ENCODE measurements at regions of chr14 and their contacts with region 1.

Region 1: DNA sequence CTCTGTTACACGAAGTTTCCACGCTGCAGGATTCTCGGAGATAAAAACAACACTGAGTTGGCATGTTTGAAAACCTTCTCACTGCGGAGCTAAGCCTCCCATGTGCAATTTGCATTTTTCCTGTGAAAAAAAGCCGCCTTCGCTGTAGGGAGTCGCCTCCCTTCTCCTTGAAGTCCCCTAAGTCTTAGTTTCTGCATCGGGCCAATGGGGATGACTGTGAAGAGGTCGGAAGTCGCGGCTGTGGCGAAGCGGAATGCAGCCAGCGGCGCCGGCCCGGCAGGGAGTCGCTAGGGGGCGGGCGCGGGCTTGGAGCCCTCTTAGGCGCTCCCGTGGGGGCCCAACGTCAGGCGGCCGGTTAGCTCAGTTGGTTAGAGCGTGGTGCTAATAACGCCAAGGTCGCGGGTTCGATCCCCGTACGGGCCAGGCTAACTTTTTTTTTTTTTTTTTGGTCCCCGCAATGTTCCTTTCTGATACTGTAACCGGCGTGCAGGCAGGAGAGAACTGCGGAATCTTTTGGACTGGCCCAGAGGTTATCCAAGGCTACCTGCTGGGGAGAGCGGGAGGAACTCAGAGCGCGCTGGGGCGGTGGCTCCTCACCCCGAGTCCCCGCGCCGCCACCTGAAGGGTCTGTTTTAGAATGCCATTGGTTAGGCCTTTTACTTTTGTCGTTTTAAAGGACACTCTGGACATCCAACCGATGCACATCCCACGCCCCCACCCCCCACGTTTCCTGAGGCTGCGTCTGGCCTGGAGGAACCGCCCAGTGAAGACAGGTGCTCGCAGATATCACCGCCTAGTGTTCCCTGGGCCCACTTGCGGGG is 2.6 kb upstream of the ZNF839 start:
- DNase-seq: peak; percentile 99
- ATAC-seq: peak; percentile 71
- H3K4me3 Mint-ChIP-seq: peak overlapping the region; percentile 96
- H3K27ac Mint-ChIP-seq: peak overlapping the region; percentile 89
- H3K4me1 Mint-ChIP-seq: peaks cover 63% of the 10 kb centered on the region
- H3K27me3 Mint-ChIP-seq: no peaks in the 10 kb centered on the region
- CTCF ChIP-seq: no peak

Region 2: GRCh38 chr14:101761032-101761880 is 555.7 kb before region 1 on chr14 and contains the start of gene PPP2R5C:
- CTCF ChIA-PET with region 1: no interaction called
- POLR2A ChIA-PET with region 1: no interaction called
- intact Hi-C with region 1: loop called (anchors 1 kb)
- DNase-seq: peak; percentile 81
- ATAC-seq: peak; percentile 63
- H3K4me3 Mint-ChIP-seq: peak within 1 kb of the TSS; percentile 88
- H3K27ac Mint-ChIP-seq: peak within 1 kb of the TSS; percentile 77
- H3K4me1 Mint-ChIP-seq: peaks cover 18% of the 10 kb centered on the region
- H3K27me3 Mint-ChIP-seq: no peaks in the 10 kb centered on the region
- CTCF ChIP-seq: no peak
- total RNA-seq, gene PPP2R5C: 197 and 227 TPM in 2 replicates

Region 3: DNA sequence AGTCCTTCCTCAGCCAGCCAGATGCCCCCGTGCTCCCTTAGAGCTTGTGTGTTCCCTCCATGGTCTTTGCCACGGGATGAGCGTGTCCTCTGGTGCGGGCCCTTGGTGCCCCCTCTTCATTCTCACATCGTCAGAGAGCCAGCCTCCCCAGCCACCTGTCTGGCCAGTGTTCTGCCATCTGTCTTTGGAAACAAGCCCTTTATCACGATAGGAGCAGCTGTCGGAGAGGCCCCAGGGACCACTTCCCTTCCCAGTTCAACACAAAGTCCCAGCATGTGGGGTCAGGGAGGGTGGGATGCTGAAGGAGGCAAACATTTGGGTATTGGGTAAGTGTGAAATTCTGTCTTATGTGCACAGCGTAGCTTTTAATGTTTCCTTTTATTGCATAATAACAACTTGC is 308.1 kb before region 1 on chr14:
- CTCF ChIA-PET with region 1: no interaction called
- POLR2A ChIA-PET with region 1: interaction called, 12 read pairs
- intact Hi-C with region 1: no loop called
- DNase-seq: no peak
- ATAC-seq: no peak
- H3K4me3 Mint-ChIP-seq: no peak overlapping the region
- H3K27ac Mint-ChIP-seq: no peak overlapping the region
- H3K4me1 Mint-ChIP-seq: no peaks in the 10 kb centered on the region
- H3K27me3 Mint-ChIP-seq: no peaks in the 10 kb centered on the region
- CTCF ChIP-seq: no peak

Region 4: DNA sequence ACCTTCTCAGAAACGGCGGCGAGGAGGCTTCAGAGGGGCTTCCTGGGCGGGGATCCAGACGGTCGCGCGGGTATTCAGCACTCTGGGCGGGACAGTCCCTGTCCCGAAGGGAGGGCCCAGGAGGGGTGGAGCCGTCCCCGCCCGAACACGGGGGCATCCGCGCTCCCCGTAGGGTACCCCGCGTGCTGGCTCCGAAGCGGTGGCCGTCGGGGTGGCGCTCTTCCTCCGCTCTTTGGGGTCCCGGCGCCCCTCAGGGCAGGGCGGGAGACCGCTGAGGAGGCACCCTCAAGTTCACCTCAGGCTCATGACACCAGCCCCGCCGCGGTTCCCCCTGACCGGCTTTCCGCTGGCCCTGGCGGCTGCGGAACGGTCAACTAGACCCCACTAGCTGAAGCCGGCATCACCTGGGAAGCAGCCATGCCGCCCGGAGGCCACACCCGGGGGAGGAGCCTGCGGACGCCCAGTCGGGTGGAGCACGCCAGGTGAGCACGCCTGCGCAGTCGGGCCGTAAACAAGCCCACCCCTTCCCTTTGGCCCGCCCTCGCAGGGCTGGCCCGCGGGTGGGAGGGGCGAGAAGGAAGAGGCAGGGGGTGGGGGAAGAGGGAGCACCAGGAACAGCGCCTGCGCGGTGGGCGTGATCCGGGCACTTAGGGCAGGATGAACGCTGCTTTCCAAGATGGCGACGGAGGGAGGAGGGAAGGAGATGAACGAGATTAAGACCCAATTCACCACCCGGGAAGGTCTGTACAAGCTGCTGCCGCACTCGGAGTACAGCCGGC is 177.5 kb before region 1 on chr14 and contains the start of gene WDR20:
- CTCF ChIA-PET with region 1: interaction called, 4 read pairs
- POLR2A ChIA-PET with region 1: interaction called, 3 read pairs
- intact Hi-C with region 1: loop called (anchors 1 kb)
- DNase-seq: peak; percentile 99
- ATAC-seq: peak; percentile 94
- H3K4me3 Mint-ChIP-seq: peak within 1 kb of the TSS; percentile 97
- H3K27ac Mint-ChIP-seq: peak within 1 kb of the TSS; percentile 93
- H3K4me1 Mint-ChIP-seq: peaks cover 19% of the 10 kb centered on the region
- H3K27me3 Mint-ChIP-seq: no peaks in the 10 kb centered on the region
- CTCF ChIP-seq: no peak
- total RNA-seq, gene WDR20: 41.1 and 42.3 TPM in 2 replicates

Region 5: GRCh38 chr14:102362545-102363181 is 45.7 kb after region 1 on chr14 and contains the starts of genes CINP and TECPR2:
- CTCF ChIA-PET with region 1: interaction called, 3 read pairs
- POLR2A ChIA-PET with region 1: interaction called, 28 read pairs
- intact Hi-C with region 1: loop called (anchors 1 kb)
- DNase-seq: peak; percentile 92
- ATAC-seq: peak; percentile 82
- H3K4me3 Mint-ChIP-seq: no peak within 1 kb of the TSS
- H3K27ac Mint-ChIP-seq: peak within 1 kb of the TSS; percentile 97
- H3K4me1 Mint-ChIP-seq: peaks cover 35% of the 10 kb centered on the region
- H3K27me3 Mint-ChIP-seq: no peaks in the 10 kb centered on the region
- CTCF ChIP-seq: no peak
- total RNA-seq, gene CINP: 48.6 and 57.5 TPM in 2 replicates
- total RNA-seq, gene TECPR2: 9.9 and 11.8 TPM in 2 replicates